Naive thymus-derived CD4-positive, alpha-beta T cell (primary cell): ENCODE measurements at regions of chr11 and their contacts with region 1.

Region 1: GRCh38 chr11:7513234-7514098 is at the start of gene PPFIBP2:
- DNase-seq: peak; percentile 75 to 92 (median 85)
- ATAC-seq: peak; percentile 93
- H3K4me3 ChIP-seq: peak within 1 kb of the TSS; percentile 94
- H3K4me3 Mint-ChIP-seq: peak within 1 kb of the TSS; percentile 92 to 98 (median 95)
- H3K27ac ChIP-seq: peak within 1 kb of the TSS; percentile 91
- H3K27ac Mint-ChIP-seq: peak within 1 kb of the TSS in 8 of 9 donors; percentile 86 to 98 (median 96)
- H3K4me1 ChIP-seq: peaks cover 4 to 39% of the 10 kb centered on the region in 2 donors
- H3K4me1 Mint-ChIP-seq: peaks cover 11 to 65% (median 52%) of the 10 kb centered on the region in 7 donors
- H3K27me3 ChIP-seq: no peaks in the 10 kb centered on the region
- H3K27me3 Mint-ChIP-seq: peaks cover 0 to 23% (median 0%) of the 10 kb centered on the region in 5 donors
- total RNA-seq, gene PPFIBP2: 5.7 to 55.6 (median 45.9) TPM

Region 2: DNA sequence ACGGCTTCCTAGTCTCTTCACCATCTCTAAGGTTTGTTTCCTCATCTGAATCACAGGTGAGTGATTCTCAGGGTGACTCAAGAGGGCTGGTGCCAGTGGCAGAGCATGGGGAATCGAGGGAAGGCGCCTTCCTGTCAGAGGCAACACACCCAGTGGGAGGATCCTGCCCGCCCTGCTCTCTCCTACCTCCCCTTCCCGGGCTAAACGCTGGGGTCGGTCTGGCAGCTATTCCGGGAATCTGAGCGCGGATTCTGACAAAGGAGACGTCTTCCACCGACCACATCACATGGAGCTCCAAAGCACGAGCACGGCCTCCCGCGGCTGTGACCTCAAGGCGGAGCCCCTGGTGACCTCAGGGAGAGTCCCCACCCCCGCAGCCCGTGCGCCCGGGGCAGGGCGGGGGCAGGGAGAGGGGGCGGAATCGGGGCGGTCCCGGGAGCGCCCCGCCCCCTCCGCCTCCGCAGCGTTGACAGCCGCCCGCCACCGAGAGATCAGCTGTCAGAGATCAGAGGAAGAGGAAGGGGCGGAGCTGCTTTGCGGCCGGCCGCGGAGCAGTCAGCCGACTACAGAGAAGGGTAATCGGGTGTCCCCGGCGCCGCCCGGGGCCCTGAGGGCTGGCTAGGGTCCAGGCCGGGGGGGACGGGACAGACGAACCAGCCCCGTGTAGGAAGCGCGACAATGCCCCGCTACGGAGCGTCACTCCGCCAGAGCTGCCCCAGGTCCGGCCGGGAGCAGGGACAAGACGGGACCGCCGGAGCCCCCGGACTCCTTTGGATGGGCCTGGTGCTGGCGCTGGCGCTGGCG is 1123.3 kb before region 1 on chr11 and contains the start of gene SMPD1:
- CTCF ChIA-PET with region 1: no interaction called
- POLR2A ChIA-PET with region 1: no interaction called
- intact Hi-C with region 1: loop called in 1 of 2 experiments (anchors 2 kb)
- DNase-seq: peak; percentile 85 to 94 (median 92)
- ATAC-seq: peak; percentile 97
- H3K4me3 ChIP-seq: peak within 1 kb of the TSS; percentile 94
- H3K4me3 Mint-ChIP-seq: peak within 1 kb of the TSS; percentile 91 to 98 (median 94)
- H3K27ac ChIP-seq: peak within 1 kb of the TSS; percentile 95
- H3K27ac Mint-ChIP-seq: peak within 1 kb of the TSS; percentile 93 to 100 (median 99)
- H3K4me1 ChIP-seq: peaks cover 25 to 53% of the 10 kb centered on the region in 2 donors
- H3K4me1 Mint-ChIP-seq: peaks cover 31 to 74% (median 66%) of the 10 kb centered on the region in 7 donors
- H3K27me3 ChIP-seq: no peaks in the 10 kb centered on the region
- H3K27me3 Mint-ChIP-seq: peaks cover 0 to 13% (median 0%) of the 10 kb centered on the region in 5 donors
- total RNA-seq, gene SMPD1: 43.0 to 70.9 (median 55.4) TPM

Region 3: DNA sequence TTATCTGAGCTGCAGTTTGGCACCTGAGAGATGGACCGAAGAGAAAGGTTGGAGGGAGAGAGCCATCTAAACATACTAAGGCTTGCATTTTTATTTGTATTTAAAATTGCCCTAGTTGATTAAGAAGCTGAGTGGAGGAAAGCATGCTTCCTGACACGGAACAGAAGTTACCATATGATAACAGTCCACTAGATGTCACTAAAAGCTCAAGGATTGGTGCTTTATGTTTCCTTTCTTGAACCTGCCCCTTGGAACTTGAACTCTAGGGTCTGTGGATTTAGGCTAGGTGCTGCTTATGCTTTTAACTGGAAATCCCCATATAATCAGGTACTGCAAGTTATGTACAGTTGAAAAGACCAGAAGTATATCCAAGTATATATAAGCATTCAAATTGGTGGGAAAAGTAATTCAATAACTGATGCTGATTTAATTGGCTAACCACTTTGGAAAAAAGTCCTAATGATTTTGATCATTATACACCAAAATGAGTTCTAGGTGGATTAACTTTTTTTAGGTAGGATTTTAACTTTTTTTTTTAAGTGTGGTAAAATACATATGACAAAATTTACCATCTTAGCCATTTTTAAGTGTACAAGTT is 415.1 kb before region 1 on chr11:
- CTCF ChIA-PET with region 1: no interaction called
- POLR2A ChIA-PET with region 1: no interaction called
- intact Hi-C with region 1: loop called in 1 of 2 experiments (anchors 1 kb)
- DNase-seq: peak in 7 of 9 donors; percentile 10 to 52 (median 39)
- ATAC-seq: peak; percentile 69
- H3K4me3 ChIP-seq: no peak overlapping the region
- H3K4me3 Mint-ChIP-seq: no peak overlapping the region
- H3K27ac ChIP-seq: no peak overlapping the region
- H3K27ac Mint-ChIP-seq: no peak overlapping the region
- H3K4me1 ChIP-seq: no peaks in the 10 kb centered on the region
- H3K4me1 Mint-ChIP-seq: no peaks in the 10 kb centered on the region
- H3K27me3 ChIP-seq: no peaks in the 10 kb centered on the region
- H3K27me3 Mint-ChIP-seq: peaks cover 18 to 40% (median 30%) of the 10 kb centered on the region in 5 donors

Region 4: DNA sequence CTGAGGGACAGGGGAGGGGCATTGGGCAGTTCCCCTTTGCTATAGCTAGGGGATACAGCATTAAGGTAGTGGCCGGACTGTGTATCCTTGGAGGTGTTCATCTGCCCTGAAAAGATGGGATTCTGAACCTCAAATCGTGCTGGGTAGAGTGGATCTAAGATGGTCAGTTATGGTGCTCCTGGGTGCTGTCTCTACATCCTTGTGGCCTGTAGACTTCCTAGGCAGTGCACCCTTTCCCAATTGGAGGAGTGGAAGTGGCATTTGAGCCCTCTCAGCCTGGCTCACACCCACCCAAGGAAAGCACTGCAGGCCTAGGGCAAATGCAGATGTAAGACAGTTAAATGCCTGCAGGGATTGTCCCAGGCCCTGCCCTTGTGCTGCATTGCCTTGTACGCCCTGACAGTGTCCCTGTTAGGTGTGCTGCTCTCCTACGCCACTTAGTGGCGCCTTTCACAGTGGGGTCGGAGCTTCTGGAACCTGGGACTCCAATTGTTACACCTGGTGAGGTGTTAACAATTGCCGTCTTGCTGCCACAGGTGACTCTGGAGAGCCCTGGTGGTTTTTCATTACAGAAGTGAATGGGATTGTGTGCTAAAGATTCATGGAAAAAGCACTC is 35.3 kb after region 1 on chr11:
- CTCF ChIA-PET with region 1: interaction called, 35 read pairs
- POLR2A ChIA-PET with region 1: interaction called, 8 read pairs
- intact Hi-C with region 1: loop called (anchors 1 to 5 kb)
- DNase-seq: peak in 5 of 9 donors; percentile 12 to 47 (median 29)
- ATAC-seq: peak; percentile 83
- H3K4me3 ChIP-seq: no peak overlapping the region
- H3K4me3 Mint-ChIP-seq: no peak overlapping the region
- H3K27ac ChIP-seq: no peak overlapping the region
- H3K27ac Mint-ChIP-seq: no peak overlapping the region
- H3K4me1 ChIP-seq: no peaks in the 10 kb centered on the region
- H3K4me1 Mint-ChIP-seq: peaks cover 0 to 47% (median 19%) of the 10 kb centered on the region in 7 donors
- H3K27me3 ChIP-seq: no peaks in the 10 kb centered on the region
- H3K27me3 Mint-ChIP-seq: no peaks in the 10 kb centered on the region

Region 5: DNA sequence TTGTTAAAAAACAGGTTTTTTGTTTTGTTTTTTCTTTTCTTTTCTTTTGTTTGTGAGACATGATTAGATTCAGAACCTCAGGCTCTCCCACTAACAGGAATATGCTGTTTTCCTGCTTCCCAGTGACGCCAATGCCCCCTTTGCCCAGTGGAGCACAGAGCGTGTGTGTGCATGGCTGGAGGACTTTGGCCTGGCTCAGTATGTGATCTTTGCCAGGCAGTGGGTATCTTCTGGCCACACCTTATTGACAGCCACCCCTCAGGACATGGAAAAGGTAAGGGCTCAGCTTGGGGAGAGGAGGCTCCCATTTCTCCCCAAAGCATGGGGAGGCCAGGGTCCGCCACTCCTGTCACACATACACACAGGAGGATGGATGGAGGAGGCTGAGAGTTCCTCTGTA is 134.8 kb after region 1 on chr11:
- CTCF ChIA-PET with region 1: interaction called, 4 read pairs
- POLR2A ChIA-PET with region 1: no interaction called
- intact Hi-C with region 1: loop called in 1 of 2 experiments (anchors 5 kb)
- DNase-seq: no peak
- ATAC-seq: no peak
- H3K4me3 ChIP-seq: no peak overlapping the region
- H3K4me3 Mint-ChIP-seq: no peak overlapping the region
- H3K27ac ChIP-seq: no peak overlapping the region
- H3K27ac Mint-ChIP-seq: no peak overlapping the region
- H3K4me1 ChIP-seq: no peaks in the 10 kb centered on the region
- H3K4me1 Mint-ChIP-seq: no peaks in the 10 kb centered on the region
- H3K27me3 ChIP-seq: no peaks in the 10 kb centered on the region
- H3K27me3 Mint-ChIP-seq: peaks cover 0 to 2% (median 0%) of the 10 kb centered on the region in 5 donors

Region 6: GRCh38 chr11:7688238-7688826 is 174.9 kb after region 1 on chr11:
- CTCF ChIA-PET with region 1: interaction called, 7 read pairs
- POLR2A ChIA-PET with region 1: no interaction called
- intact Hi-C with region 1: loop called in 1 of 2 experiments (anchors 1 kb)
- DNase-seq: peak in 5 of 9 donors; percentile 8 to 31 (median 22)
- ATAC-seq: peak; percentile 55
- H3K4me3 ChIP-seq: no peak overlapping the region
- H3K4me3 Mint-ChIP-seq: no peak overlapping the region
- H3K27ac ChIP-seq: no peak overlapping the region
- H3K27ac Mint-ChIP-seq: no peak overlapping the region
- H3K4me1 ChIP-seq: no peaks in the 10 kb centered on the region
- H3K4me1 Mint-ChIP-seq: peaks cover 0 to 2% (median 0%) of the 10 kb centered on the region in 7 donors
- H3K27me3 ChIP-seq: no peaks in the 10 kb centered on the region
- H3K27me3 Mint-ChIP-seq: peaks cover 25 to 42% (median 32%) of the 10 kb centered on the region in 5 donors